BJ (cell line): ENCODE measurements at regions of chrX and their contacts with region 1.

Region 1: GRCh38 chrX:24054182-24055042 is at the start of gene EIF2S3:
- DNase-seq: peak; percentile 82
- H3K4me3 ChIP-seq: peak within 1 kb of the TSS; percentile 95; the same call in 1 of the 2 replicates
- H3K27me3 ChIP-seq: no peaks in the 10 kb centered on the region
- CTCF ChIP-seq: peak; percentile 64
- polyA plus RNA-seq, gene EIF2S3: 55.9 and 108 TPM in 2 replicates

Region 2: DNA sequence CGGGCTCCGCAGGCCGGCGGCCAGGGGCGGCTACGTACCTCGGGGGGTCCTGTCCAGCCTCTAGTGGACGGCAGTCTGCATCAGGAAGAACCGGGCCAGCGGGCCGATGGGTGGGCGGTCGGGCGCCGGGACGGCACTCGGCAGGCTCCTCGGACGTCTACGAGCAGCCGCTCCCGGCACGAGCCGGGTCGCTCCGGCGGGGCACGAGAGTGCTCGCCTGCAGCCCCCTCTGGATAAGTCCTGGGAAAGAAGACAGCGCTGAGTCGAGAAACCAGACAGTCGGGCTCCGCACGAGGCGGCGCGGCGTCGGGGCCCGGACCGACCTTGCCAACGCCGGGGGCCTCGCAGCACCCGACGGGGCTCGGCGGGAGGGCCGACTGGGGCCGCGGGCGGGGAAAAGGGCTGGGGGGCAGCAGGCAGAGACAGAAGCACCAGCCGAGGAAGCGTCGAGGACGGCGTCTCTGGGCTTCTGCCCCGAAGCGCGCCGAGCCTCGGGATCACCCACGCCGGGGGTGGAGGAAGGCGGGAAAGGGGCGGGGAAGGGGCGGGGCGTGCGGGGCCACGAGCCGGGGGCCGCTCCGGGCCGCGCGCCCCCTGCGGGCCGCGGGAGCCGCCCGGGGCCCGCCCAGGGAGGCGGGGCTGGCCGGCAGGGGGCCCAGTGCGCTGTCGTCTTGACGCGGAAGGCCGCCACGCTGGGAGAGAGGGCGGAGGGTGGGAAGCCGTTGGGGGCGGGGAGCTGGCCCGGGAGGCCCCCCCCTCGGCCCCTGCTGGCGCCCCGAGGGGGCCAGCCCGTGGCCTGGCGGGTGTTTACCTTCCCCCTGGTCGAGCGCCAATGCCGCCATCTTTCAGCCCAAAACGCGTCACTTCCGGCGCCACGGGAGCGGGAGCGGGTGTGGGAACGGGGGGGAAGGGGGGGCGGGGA is 29.3 kb before region 1 on chrX:
- CTCF ChIA-PET with region 1: interaction called, 11 read pairs
- POLR2A ChIA-PET with region 1: interaction called, 7 read pairs
- DNase-seq: peak; percentile 41
- H3K4me3 ChIP-seq: peak overlapping the region; percentile 74
- H3K27me3 ChIP-seq: no peaks in the 10 kb centered on the region
- CTCF ChIP-seq: no peak

Region 3: DNA sequence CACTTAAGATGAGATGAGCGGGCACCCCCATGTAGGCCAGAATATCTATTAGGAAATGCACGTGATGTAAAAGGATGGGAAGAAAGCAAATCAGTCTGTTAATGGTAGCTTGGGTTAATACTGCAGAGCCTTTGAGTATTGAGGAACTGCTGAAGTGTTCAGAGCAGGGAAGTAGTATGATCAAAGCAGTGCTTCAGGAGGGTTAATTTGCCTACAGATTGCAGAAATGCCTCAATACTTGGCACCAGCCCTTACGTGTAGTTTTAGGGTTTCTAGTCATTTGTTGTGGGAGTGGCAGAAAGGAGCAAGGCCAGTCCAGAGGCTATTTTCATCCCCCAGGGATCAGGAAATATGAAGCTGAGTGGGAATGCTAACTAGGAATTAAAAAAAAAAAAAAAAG is 114.8 kb after region 1 on chrX:
- CTCF ChIA-PET with region 1: no interaction called
- POLR2A ChIA-PET with region 1: no interaction called
- DNase-seq: no peak
- H3K4me3 ChIP-seq: no peak overlapping the region
- H3K27me3 ChIP-seq: no peaks in the 10 kb centered on the region
- CTCF ChIP-seq: no peak

Region 4: DNA sequence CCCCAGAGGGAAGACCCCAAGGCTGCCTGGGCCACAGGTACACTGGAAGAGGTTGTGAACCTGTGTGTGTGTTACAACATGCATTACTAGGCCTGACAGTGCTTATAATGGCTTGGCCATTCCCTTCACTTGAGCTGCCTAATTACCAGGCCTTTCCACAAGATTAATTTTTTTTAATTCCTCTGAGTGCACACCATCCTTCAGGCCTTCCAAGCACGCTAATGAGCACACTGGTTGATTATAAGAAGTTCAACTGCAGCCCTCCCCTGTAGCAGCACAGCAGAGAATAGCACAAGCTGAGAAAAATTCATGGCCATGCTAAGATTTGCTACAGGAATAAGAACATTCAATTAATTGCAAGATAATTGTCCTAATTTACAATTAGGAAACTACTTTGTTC is 261.7 kb after region 1 on chrX:
- CTCF ChIA-PET with region 1: no interaction called
- POLR2A ChIA-PET with region 1: no interaction called
- DNase-seq: no peak
- H3K4me3 ChIP-seq: no peak overlapping the region
- H3K27me3 ChIP-seq: no peaks in the 10 kb centered on the region
- CTCF ChIP-seq: no peak

Region 5: DNA sequence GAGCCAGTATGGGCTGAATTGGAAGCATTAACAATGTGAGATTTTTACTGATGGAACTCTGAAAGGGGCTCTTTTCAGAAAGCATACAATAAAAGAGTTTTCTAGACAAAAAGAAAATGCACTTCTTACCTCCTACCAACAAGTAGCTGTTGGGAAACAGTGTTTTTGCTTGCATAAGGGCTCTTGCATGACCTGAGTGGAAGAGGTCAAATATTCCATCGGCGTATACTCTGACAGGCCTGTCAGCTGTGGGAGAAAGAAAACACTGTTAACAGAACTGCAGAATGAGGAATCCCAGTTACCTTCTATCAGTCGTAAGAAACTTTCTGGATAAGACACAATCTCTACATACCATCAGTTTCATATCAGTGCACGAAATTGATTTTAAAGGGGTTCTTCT is 553.2 kb after region 1 on chrX:
- CTCF ChIA-PET with region 1: no interaction called
- POLR2A ChIA-PET with region 1: no interaction called
- DNase-seq: no peak
- H3K4me3 ChIP-seq: no peak overlapping the region
- H3K27me3 ChIP-seq: no peaks in the 10 kb centered on the region
- CTCF ChIP-seq: no peak